ENCODE measurements at regions of chr4 and their contacts with region 1.

Region 1: GRCh38 chr4:184538023-184538599 is 63.8 kb upstream of the IRF2 start:
- DNase-seq: peak; percentile 89
- ATAC-seq: peak; percentile 92 to 95

Region 2: DNA sequence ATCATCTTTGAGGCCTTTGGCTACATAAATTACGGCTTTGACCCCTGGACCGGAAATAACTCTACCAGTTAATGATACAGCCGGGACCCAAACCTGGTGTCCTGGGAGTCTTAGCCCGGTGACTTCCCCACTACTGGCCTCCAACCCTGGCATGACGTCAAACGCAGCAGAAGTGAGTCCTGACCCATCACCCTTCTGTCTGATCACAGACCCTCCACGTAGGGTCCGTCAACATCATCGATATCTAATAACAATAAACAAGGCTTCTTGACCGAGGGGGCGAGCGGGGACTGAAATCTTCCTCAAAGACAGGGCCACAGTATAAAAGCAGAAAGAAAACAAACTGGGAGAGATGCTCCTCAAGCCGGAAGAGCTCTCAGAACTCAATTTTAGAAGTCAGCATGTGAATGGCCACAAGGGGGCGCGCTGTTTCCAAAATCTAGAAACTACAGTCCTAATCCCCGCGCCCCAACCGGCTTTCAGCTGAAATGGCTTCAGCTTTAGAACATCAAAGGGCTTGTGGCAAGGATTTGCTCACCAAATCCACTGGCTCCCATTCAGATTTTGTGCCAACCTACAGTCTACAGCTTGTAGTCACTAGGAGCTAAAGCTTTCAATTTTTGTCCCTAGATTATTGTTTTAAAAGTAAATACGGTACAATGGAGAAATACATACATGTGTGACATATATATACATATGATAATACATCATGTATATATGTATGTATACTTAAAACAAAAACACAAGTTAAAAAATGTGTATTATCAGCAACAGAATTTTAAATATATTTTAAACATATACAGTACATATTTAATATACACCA is 274.0 kb before region 1 on chr4:
- intact Hi-C with region 1: loop called in 1 of 2 experiments (anchors 2 kb)
- DNase-seq: peak; percentile 94
- ATAC-seq: peak; percentile 78 to 84

Region 3: DNA sequence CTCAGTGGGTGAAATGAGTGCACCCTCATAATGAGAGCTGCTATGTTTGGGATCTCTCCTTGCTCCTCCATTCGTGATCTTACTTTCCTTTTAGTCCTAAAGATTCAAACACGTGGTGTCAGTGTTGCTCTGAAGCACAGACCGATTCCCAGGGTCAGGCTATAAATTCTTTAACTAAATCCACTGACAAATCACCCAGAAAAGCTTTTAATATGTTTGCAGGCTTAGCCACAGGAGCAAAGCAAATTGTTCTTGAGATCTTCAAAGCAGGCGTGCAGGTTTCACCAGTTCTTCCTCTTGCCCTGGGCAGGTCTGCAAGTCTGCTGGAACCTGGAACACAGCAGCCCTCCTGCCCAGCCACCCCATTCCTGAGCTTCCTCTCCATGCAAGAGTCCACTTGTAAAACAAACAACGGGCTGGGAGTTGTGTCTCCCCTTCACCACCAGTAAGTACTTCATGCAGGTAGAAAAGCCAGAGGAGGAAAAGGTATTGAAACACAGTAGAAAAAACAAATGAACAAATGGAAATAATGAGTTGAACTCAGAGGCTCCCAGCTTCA is 250.3 kb before region 1 on chr4:
- intact Hi-C with region 1: loop called (anchors 5 kb)
- DNase-seq: no peak
- ATAC-seq: peak; percentile 79 to 87

Region 4: DNA sequence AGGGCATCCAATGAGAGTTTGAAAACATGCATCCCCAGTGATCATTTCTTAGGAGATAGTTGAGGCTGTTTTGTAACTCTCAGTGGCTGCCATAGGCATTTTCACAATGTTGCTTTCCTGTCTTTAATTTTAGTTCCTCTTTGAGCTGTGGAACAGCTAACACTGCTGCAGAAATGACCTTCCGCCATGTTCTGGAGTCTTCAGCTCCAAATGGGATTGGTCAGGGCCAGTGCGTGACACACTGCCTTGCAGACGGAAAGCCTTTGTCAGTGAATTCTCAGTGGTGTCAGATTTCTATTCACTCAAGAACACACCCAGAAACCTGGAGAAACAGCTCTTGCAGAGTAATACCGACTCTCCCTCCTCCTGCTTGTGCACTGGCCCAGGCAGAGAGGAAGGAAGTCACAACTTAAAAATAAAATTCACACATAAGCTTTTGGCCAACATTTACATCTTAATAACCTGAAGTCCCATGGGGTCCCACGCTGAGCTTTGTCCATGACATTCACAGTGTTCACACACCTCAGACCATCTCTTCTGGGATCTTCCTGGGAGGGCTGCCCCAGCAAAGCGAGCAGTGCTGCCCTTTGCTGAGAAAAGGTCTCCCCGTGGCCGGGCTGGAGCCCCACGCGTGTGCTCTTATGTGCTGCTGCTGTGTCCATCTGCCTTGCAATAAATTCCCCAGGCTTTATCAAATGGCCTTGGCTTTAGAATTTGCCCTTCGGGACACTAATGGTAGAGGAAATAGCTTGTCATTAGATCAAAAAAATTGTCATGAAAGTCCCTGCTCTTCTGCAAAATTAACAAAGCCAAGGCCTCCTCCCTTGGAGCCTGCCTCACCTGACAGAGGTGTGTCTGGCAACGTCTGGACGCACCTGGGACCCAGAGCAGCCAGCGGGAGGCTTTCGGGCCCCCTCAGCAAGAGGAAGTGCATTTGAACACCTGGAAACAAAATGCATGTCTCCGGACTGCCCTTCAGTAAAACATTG is 190.6 kb before region 1 on chr4:
- intact Hi-C with region 1: loop called in 1 of 2 experiments (anchors 5 kb)
- DNase-seq: peak; percentile 56
- ATAC-seq: peak; percentile 49 to 53

Region 5: DNA sequence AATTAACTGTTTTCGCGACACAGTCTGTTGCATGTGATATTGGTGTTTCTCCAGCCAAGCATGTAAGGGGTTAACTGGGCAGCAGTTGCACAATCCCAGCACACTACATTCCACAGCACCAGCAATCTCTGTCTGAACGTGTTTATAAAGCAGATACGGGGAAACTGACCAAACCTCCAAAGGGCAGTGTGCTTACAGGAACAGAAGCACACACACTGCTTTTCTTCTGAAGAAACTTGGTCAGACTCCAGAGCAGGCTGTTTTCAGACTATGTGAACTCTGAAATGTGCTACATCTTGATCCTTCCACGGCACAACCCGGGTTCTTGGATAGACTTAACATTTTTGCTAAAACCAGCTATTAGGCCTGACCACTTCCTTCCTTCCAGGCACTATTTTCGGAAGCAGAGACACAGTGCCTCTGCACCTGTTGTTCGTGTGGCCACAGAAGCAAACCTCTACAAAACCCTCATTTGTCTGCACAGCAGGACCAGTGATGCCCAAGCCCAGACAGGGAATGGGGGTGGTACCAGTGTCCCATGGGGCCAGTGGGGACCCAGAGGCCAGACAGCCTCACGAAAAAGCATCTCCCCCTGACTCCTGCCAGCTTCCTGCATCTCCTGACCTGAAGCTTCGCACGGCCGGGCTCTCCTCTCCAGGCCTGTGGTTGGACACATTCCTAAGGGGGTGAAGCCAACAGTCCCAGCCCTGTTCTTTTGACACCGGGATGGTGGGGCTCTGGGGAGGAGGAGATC is 153.9 kb before region 1 on chr4:
- intact Hi-C with region 1: loop called (anchors 5 to 10 kb)
- DNase-seq: peak; percentile 61
- ATAC-seq: peak; percentile 73 to 81

Region 6: DNA sequence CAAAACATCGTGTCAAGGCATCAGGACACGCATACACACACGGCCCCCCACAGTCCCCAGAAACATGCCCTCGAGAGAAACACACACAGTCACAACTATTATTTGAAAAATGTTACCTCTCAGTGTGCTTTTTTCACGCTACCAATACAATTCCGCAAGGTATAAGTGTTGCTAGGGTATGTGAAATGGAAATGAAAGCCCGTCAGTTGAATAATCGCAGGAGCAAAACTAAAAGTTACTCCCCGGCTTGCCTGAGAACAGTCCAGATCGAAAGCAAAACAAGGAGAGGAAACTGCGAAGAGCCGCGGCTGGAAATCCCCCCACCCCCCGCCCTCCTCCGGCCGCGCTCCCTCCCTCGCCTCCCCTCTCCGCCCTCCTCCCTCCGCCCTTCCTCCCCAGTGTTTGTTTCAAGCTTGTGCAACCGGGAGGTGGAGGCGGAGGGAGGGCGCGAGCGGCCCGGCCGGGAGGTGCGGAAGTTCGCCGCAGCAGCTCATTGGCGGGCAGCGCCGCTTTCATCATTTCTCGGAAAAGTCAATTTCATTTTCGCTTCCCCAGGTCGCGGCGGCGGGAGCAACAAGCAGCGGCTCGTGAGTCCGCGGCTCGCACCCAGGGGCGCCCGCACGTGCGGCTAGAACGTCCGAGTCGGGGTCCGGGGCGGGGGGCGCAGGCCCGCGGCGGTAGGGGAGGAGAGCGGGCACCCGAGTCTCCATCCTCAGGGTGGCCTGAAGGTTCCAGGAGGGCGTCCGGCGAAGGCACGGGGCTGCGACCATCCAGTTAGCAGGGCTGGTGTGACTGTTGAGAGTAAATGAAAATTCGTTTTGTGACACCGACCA is 63.6 kb before region 1 on chr4 and contains the start of gene IRF2:
- intact Hi-C with region 1: loop called (anchors 1 to 2 kb)
- DNase-seq: peak; percentile 98
- ATAC-seq: peak; percentile 90 to 94
- total RNA-seq, gene IRF2: 27.1 to 30.0 TPM

Region 7: GRCh38 chr4:184649026-184649970 is 111.2 kb after region 1 on chr4 and contains the starts of genes CASP3 and PRIMPOL:
- intact Hi-C with region 1: loop called in 1 of 2 experiments (anchors 5 kb)
- DNase-seq: peak; percentile 97
- ATAC-seq: peak; percentile 97
- total RNA-seq, gene CASP3: 10.2 to 12.0 TPM
- total RNA-seq, gene PRIMPOL: 9.8 to 10.2 TPM

Measured in left cardiac atrium (tissue), 4 donors.